ENCODE measurements at regions of chr11 and their contacts with region 1.

Region 1: GRCh38 chr11:123560006-123560405 is 94.4 kb downstream of the SCN3B start:
- DNase-seq: no peak
- H3K4me3 Mint-ChIP-seq: no peak overlapping the region
- H3K27ac Mint-ChIP-seq: no peak overlapping the region
- H3K4me1 Mint-ChIP-seq: no peaks in the 10 kb centered on the region
- H3K27me3 Mint-ChIP-seq: peaks cover 70% of the 10 kb centered on the region
- CTCF ChIP-seq: no peak

Region 2: GRCh38 chr11:123511037-123511870 is 48.8 kb before region 1 on chr11:
- CTCF ChIA-PET with region 1: interaction called, 5 read pairs
- POLR2A ChIA-PET with region 1: no interaction called
- intact Hi-C with region 1: loop called (anchors 1 kb)
- DNase-seq: peak; percentile 90
- H3K4me3 Mint-ChIP-seq: no peak overlapping the region
- H3K27ac Mint-ChIP-seq: no peak overlapping the region
- H3K4me1 Mint-ChIP-seq: peaks cover 6% of the 10 kb centered on the region
- H3K27me3 Mint-ChIP-seq: peaks cover 37% of the 10 kb centered on the region
- CTCF ChIP-seq: peak; percentile 79

Region 3: DNA sequence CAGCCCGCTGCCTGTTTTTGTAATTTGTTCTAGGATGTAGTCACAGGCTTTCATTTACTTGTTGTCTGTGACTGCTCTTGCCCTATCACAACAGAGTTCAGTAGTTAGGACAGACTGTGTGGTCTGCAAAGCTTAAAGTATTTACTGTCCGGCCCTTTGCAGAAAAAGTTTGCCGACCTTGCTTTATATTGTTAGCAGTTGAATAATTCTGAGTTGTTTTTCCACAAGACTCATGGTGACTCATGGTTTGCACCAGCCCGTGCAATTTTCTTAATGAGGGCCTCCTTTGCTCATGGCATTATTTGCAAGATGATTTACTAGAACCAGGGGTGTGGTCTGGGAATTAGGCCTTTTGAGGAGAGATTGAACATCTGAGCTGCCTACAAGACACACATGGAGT is 16.2 kb before region 1 on chr11:
- CTCF ChIA-PET with region 1: interaction called, 11 read pairs
- POLR2A ChIA-PET with region 1: no interaction called
- intact Hi-C with region 1: no loop called
- DNase-seq: peak; percentile 59
- H3K4me3 Mint-ChIP-seq: no peak overlapping the region
- H3K27ac Mint-ChIP-seq: no peak overlapping the region
- H3K4me1 Mint-ChIP-seq: peaks cover 11% of the 10 kb centered on the region
- H3K27me3 Mint-ChIP-seq: peaks cover 11% of the 10 kb centered on the region
- CTCF ChIP-seq: no peak

Measured in MCF 10A (cell line).